ENCODE measurements at regions of chr3 and their contacts with region 1.

Region 1: DNA sequence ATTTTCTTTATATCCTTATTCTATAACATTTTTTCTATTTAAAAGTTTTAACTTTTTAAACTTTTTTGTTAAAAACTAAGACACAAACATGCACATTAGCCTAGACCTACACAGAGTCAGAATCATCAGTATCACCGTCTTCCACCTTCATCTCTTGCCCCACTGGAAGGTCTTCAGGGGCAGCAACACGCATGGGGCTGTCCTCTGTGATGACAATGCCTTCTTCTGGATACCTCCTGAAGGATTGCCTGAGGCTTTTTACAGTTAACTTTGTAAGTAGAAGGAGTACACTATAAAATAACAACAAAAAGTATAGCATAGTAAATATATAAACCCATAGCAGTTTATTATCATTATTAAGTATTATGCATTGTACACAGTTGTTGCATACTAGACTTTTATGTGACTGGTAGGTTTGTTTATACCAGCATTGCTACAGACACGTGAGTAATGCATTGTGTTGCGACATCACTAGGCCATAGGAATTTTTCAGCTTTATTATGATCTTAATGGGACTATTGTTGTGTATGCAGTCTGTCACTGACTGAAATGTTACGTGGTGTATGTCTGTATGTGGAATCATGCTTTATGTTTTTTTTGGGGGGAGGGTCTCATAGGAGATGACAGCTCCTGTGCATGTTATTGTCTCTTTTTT is 18.2 kb downstream of the ATP1B3 start:
- DNase-seq: no peak
- H3K4me3 Mint-ChIP-seq: no peak overlapping the region
- H3K27ac Mint-ChIP-seq: no peak overlapping the region
- H3K4me1 Mint-ChIP-seq: peaks cover 44% of the 10 kb centered on the region
- H3K27me3 Mint-ChIP-seq: no peaks in the 10 kb centered on the region

Region 2: GRCh38 chr3:141913150-141913811 is 18.6 kb after region 1 on chr3:
- CTCF ChIA-PET with region 1: interaction called, 8 read pairs
- POLR2A ChIA-PET with region 1: interaction called, 3 read pairs
- intact Hi-C with region 1: loop called (anchors 2 kb)
- DNase-seq: peak; percentile 63
- H3K4me3 Mint-ChIP-seq: no peak overlapping the region
- H3K27ac Mint-ChIP-seq: no peak overlapping the region
- H3K4me1 Mint-ChIP-seq: peaks cover 5% of the 10 kb centered on the region
- H3K27me3 Mint-ChIP-seq: no peaks in the 10 kb centered on the region

Measured in activated CD4-positive, alpha-beta memory T cell treated with anti-CD3 and anti-CD28 coated beads for 36 hours (primary cell).